Posterior cingulate gyrus (tissue), 11 donors: ENCODE measurements at regions of chr14 and their contacts with region 1.

Region 1: DNA sequence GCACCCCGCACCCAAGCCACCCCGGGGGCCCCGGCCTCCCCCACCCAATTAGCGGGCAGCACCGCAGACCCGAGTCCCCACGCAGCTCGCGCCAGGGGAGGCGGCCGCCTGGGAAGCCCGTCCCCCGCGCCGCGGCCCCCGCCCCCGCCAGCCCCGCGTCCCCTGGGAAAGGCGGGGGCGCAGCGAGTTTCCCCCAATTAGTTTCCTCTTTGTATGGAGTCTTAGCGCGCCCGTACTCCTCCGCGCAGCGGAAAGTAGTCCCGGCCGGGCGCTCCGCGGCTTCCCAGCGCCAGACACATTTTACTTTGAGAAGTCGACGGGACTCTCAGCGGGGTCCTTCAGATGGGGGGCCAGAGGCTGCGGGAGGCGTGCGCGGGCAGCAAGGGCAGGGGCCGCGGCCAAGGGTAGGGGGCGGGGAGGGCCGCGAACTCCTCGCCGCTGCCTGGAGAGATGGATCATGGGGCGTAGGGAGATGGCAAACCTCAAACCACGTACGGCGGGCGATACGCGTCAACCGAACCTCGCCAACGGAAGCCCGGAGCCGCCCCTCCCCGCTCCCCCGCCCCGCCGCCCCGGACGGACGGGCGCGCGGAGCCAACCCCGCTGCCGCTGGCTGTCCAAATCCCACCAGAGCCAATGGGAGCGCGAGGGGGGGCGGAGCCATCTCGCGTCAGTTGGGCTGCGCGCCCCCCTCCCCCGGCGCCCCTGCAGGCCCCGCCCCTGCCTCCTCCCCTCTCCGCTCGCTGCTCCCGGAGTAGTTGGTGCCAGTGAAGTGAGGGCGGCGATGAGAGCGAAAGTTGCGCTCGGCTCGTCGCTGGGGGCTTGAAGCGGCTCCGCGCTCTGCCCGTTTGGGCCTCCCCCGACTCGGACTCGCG is at the start of gene RCOR1:
- DNase-seq: peak; percentile 96 to 100 (median 98)

Region 2: DNA sequence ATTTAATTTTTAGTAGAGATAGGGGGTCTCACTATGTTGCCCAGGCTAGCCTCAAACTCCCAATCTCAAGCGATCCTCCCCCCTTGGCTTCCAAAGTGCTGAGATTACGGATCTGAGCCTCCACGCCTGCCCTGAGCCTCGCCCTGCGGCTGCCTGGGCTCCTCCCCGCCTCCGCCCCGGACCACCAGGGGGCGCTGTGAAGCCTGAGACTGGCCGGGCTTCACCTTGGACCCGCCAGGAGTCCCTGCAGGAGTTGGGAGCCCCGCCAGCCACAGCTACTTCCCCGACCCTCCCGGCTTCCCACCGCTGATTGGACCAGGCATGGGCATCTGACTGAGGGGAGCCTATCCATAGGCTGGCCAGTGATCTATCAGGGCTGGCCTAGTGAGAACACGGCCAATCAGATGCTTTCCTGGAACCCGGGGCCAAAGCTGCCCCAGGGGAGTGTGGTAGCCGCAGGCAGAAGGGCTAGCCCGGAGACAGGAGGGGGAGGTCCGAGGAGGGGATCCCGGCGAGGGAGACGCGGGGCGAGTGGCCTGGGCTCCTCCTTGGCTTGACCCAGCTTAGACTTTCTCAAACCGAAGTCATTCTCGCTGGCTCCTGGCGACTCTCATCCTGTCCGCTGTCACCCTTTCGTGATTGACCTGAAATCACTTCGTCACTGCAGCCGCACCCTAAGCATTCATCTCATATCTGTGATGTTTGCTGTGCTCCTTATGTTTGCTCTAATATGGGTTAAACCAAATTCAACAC is 67.5 kb before region 1 on chr14:
- intact Hi-C with region 1: loop called (anchors 1 kb)
- DNase-seq: peak; percentile 95 to 99 (median 98)

Region 3: GRCh38 chr14:102610968-102611811 is 19.1 kb after region 1 on chr14:
- intact Hi-C with region 1: no loop called
- DNase-seq: peak in 1 of 10 donors; percentile 23